Activated CD8-positive, alpha-beta T cell treated with anti-CD3 and anti-CD28 coated beads, Interleukin-2, amount 10 ng/mL, durations not matched to agents 7 days and 5 days (primary cell): ENCODE measurements at regions of chr20 and their contacts with region 1.

Region 1: GRCh38 chr20:17536944-17537444 is 5.8 kb upstream of the BFSP1 start:
- DNase-seq: peak; percentile 80
- ATAC-seq: peak; percentile 97
- H3K4me3 Mint-ChIP-seq: no peak overlapping the region
- H3K27ac Mint-ChIP-seq: no peak overlapping the region
- H3K4me1 Mint-ChIP-seq: peaks cover 32% of the 10 kb centered on the region
- H3K27me3 Mint-ChIP-seq: peaks cover 14% of the 10 kb centered on the region

Region 2: GRCh38 chr20:17298171-17298570 is 238.8 kb before region 1 on chr20:
- CTCF ChIA-PET with region 1: no interaction called
- POLR2A ChIA-PET with region 1: no interaction called
- DNase-seq: no peak
- ATAC-seq: no peak
- H3K4me3 Mint-ChIP-seq: no peak overlapping the region
- H3K27ac Mint-ChIP-seq: no peak overlapping the region
- H3K4me1 Mint-ChIP-seq: no peaks in the 10 kb centered on the region
- H3K27me3 Mint-ChIP-seq: no peaks in the 10 kb centered on the region

Region 3: GRCh38 chr20:17421493-17421892 is 115.5 kb before region 1 on chr20:
- CTCF ChIA-PET with region 1: no interaction called
- POLR2A ChIA-PET with region 1: no interaction called
- DNase-seq: no peak
- ATAC-seq: no peak
- H3K4me3 Mint-ChIP-seq: no peak overlapping the region
- H3K27ac Mint-ChIP-seq: no peak overlapping the region
- H3K4me1 Mint-ChIP-seq: no peaks in the 10 kb centered on the region
- H3K27me3 Mint-ChIP-seq: peaks cover 2% of the 10 kb centered on the region

Region 4: DNA sequence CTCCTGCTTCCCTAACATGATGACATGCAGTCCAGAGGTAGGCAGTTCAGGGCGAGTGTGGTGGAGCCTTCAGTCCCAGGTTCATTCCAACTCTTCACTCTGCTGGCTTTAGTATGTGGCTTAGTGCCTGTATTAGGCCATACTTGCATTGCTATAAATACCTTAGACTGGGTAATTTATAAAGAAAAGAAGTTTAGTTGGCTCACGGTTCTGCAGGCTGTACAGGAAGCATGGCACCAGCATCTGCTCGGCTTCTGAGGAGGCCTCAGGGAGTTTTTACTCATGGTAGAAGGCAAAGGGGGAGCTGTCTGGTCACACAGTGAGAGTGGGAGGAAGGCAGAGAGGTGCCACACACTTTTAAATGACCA is 14.0 kb after region 1 on chr20:
- CTCF ChIA-PET with region 1: no interaction called
- POLR2A ChIA-PET with region 1: no interaction called
- DNase-seq: no peak
- ATAC-seq: no peak
- H3K4me3 Mint-ChIP-seq: no peak overlapping the region
- H3K27ac Mint-ChIP-seq: no peak overlapping the region
- H3K4me1 Mint-ChIP-seq: no peaks in the 10 kb centered on the region
- H3K27me3 Mint-ChIP-seq: peaks cover 10% of the 10 kb centered on the region

Region 5: GRCh38 chr20:17617551-17618223 is 80.7 kb after region 1 on chr20:
- CTCF ChIA-PET with region 1: interaction called, 18 read pairs
- POLR2A ChIA-PET with region 1: no interaction called
- DNase-seq: peak; percentile 54
- ATAC-seq: peak; percentile 40
- H3K4me3 Mint-ChIP-seq: no peak overlapping the region
- H3K27ac Mint-ChIP-seq: no peak overlapping the region
- H3K4me1 Mint-ChIP-seq: peaks cover 12% of the 10 kb centered on the region
- H3K27me3 Mint-ChIP-seq: no peaks in the 10 kb centered on the region

Region 6: DNA sequence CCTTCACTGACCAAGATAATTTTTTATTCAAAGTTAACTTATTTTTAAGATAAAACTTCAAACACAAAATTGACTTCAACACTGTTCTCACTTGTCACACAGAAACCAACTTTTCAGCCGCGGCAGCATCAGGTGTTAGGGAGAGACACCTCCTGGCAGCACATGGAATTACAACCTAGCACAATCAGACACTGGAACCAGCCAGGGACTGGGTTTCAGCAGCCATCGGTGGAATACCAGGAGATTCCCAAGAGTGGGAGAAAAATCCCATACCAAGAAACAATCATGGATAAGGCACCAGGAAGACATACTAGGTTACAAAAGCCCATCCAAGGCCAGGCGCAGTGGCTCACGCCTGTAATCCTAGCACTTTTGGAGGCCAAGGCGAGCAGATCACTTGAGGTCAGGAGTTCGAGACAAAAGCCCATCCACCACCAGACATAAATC is 361.6 kb after region 1 on chr20:
- CTCF ChIA-PET with region 1: interaction called, 10 read pairs
- POLR2A ChIA-PET with region 1: no interaction called
- DNase-seq: peak; percentile 82
- ATAC-seq: peak; percentile 69
- H3K4me3 Mint-ChIP-seq: no peak overlapping the region
- H3K27ac Mint-ChIP-seq: no peak overlapping the region
- H3K4me1 Mint-ChIP-seq: peaks cover 21% of the 10 kb centered on the region
- H3K27me3 Mint-ChIP-seq: peaks cover 34% of the 10 kb centered on the region